A549 (cell line): ENCODE measurements at regions of chr6 and their contacts with region 1.

Region 1: GRCh38 chr6:32838114-32838958 is at the start of gene TAP2:
- DNase-seq: peak; percentile 88 to 90
- ATAC-seq: peak; percentile 94 to 98
- H3K4me3 ChIP-seq: peak within 1 kb of the TSS; percentile 74
- H3K27ac ChIP-seq: peak within 1 kb of the TSS; percentile 83 to 90
- H3K4me1 ChIP-seq: peaks cover 8% of the 10 kb centered on the region; the same call in 1 of the 3 replicates
- CTCF ChIP-seq: peak; percentile 81
- EP300 ChIP-seq: no peak
- POLR2A ChIP-seq: peak; percentile 29
- RAD21 ChIP-seq: peak; percentile 90 to 91
- polyA plus RNA-seq, gene TAP2: 11.4 and 12.1 TPM in 2 replicates

Region 2: GRCh38 chr6:32825966-32826365 is 12.4 kb before region 1 on chr6:
- CTCF ChIA-PET with region 1: interaction called, 69 read pairs
- POLR2A ChIA-PET with region 1: interaction called, 3 read pairs
- DNase-seq: peak in 1 of 2 experiments; percentile 24
- ATAC-seq: peak; percentile 68 to 71; a peak in 5 of 6 replicates
- H3K4me3 ChIP-seq: no peak overlapping the region
- H3K27ac ChIP-seq: no peak overlapping the region
- H3K4me1 ChIP-seq: no peaks in the 10 kb centered on the region
- CTCF ChIP-seq: peak; percentile 40
- EP300 ChIP-seq: no peak
- POLR2A ChIP-seq: no peak
- RAD21 ChIP-seq: peak; percentile 47 to 49

Region 3: DNA sequence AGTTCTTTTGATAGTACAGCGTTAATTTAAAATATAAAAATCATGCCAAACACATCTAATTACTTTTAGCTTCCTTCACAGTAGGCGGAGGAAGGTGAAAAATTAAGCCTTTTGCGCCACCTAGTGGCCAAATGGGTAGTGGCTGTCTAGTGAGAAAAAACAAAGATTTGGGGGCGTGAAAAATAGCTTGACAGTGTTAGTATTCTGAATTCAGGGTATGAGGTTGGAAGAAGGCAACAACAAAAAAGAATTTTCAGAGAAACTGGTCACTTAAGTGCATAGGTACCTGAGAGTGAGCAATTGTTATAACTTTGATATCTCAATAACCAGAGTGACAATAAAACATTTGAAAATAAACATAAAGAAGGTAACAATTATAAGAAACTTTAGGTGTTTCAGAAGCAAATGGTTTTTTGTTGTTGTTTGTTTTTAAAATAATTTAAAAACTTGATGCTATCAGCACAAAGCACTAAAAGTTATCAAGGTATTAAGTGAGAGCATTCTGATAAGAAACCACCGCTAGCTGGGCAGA is 30.0 kb after region 1 on chr6:
- CTCF ChIA-PET with region 1: interaction called, 253 read pairs
- POLR2A ChIA-PET with region 1: interaction called, 12 read pairs
- DNase-seq: peak; percentile 20 to 63
- ATAC-seq: peak; percentile 84 to 86; a peak in 5 of 6 replicates
- H3K4me3 ChIP-seq: no peak overlapping the region
- H3K27ac ChIP-seq: no peak overlapping the region
- H3K4me1 ChIP-seq: no peaks in the 10 kb centered on the region
- CTCF ChIP-seq: peak; percentile 83
- EP300 ChIP-seq: no peak
- POLR2A ChIP-seq: no peak
- RAD21 ChIP-seq: peak; percentile 88 to 91

Region 4: GRCh38 chr6:32894080-32895005 is 56.0 kb after region 1 on chr6:
- CTCF ChIA-PET with region 1: interaction called, 10 read pairs
- POLR2A ChIA-PET with region 1: no interaction called
- DNase-seq: peak; percentile 91 to 95
- ATAC-seq: peak; percentile 99
- H3K4me3 ChIP-seq: peak overlapping the region; percentile 70
- H3K27ac ChIP-seq: peak overlapping the region; percentile 96 to 97
- H3K4me1 ChIP-seq: peaks cover 15% of the 10 kb centered on the region
- CTCF ChIP-seq: no peak
- EP300 ChIP-seq: no peak
- POLR2A ChIP-seq: peak; percentile 70
- RAD21 ChIP-seq: no peak; a peak in 1 of 5 replicates

Region 5: DNA sequence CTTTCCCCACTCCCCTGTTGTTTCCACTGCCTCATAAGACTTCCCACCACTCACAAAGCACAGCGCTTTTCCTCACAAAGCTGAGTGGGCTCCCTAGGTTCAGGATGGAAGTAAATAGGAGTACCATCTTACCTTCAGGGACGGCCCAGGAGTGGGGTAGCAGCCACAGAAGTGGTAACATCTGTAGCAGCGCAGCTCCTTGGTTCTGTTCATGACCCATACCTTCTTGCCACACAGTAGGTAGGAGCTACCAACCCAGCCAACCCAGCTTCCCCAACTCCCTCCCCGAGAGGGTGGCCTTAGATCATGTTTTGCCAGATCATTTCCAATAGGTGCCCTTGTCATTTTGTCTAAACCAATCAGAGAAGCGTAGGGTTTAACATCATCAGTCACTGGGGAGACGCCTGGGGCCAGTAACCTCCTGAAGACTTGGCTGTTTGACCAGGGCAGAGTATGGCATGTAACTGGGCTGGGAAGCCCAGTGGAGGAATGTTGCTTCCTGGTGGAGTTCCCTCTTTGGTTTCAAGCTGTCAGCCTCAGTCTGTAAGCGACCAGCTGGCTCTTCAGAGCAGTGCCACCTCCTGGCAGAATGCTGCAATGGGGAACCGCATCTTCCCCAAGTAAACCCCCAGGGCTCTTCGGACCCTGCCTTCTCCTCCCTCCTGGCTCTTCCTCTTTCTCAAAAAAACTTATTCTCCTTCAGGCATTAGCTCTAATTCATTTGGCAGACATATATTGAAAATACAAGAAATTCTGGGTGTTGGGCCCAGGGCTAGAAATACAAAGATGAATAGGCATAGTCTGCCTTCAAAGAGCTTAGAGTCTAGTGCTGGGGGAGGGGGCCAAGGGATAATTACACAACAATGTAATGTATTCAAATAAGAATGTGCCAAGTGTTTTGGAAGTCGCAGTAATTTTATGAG is 114.7 kb after region 1 on chr6 and contains the start of gene HLA-DMA:
- CTCF ChIA-PET with region 1: interaction called, 21 read pairs
- POLR2A ChIA-PET with region 1: no interaction called
- DNase-seq: peak; percentile 49 to 93
- ATAC-seq: peak; percentile 88 to 99
- H3K4me3 ChIP-seq: no peak within 1 kb of the TSS
- H3K27ac ChIP-seq: no peak within 1 kb of the TSS
- H3K4me1 ChIP-seq: peaks cover 5% of the 10 kb centered on the region; the same call in 1 of the 3 replicates
- CTCF ChIP-seq: peak; percentile 50
- EP300 ChIP-seq: no peak
- POLR2A ChIP-seq: no peak
- RAD21 ChIP-seq: peak; percentile 24 to 28; a peak in 2 of 5 replicates
- polyA plus RNA-seq, gene HLA-DMA: 5.6 and 7.0 TPM in 2 replicates